ENCODE measurements at regions of chr10 and their contacts with region 1.

Region 1: DNA sequence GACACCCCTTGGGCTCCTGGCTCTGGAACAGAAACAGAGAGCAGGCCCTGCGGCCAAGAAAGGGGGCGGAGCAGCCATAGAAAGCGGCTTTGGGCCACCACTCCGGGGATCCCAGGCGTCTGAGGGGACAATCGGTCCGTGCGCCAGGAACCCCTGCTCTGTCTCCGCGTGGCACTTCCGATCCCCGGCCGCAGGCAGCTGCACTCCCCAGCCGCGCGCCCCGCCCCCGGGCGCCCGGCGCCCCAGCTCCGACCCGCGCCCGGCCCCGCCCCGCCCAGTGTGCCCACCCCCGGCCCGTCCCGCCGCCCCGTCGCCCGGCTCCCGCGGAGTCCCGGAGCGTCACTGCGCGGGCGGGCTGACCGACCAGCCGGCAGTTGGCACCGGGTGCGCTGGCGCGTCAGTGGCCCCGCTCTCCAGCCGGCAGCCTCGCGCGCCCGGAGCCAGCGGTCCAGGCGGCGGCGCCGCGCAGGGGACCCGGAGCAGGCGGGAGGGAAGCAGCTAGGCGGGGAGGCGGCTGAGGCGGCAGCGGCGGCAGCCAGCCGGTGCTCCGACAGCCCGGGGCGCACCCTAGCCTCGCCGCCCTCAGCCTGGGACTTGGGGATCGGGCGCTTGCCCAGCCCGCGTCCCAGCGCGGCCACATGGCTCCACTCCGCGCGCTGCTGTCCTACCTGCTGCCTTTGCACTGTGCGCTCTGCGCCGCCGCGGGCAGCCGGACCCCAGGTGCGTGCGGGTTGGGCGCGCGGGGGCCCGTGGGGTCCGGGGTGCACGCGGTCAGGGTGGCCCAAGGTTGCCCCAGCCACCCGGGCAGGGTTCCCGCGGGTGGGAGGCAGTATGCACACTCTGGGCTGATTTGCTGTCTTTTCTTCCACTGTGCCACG is at the start of gene ADAMTS14:
- DNase-seq: peak; percentile 54 to 83 (median 81)
- ATAC-seq: peak; percentile 40 to 59
- H3K4me3 ChIP-seq: peak within 1 kb of the TSS; percentile 53
- H3K27ac ChIP-seq: no peak within 1 kb of the TSS
- H3K4me1 ChIP-seq: peaks cover 6% of the 10 kb centered on the region
- H3K27me3 ChIP-seq: no peaks in the 10 kb centered on the region
- total RNA-seq, gene ADAMTS14: 0.03 to 0.36 (median 0.19) TPM

Region 2: DNA sequence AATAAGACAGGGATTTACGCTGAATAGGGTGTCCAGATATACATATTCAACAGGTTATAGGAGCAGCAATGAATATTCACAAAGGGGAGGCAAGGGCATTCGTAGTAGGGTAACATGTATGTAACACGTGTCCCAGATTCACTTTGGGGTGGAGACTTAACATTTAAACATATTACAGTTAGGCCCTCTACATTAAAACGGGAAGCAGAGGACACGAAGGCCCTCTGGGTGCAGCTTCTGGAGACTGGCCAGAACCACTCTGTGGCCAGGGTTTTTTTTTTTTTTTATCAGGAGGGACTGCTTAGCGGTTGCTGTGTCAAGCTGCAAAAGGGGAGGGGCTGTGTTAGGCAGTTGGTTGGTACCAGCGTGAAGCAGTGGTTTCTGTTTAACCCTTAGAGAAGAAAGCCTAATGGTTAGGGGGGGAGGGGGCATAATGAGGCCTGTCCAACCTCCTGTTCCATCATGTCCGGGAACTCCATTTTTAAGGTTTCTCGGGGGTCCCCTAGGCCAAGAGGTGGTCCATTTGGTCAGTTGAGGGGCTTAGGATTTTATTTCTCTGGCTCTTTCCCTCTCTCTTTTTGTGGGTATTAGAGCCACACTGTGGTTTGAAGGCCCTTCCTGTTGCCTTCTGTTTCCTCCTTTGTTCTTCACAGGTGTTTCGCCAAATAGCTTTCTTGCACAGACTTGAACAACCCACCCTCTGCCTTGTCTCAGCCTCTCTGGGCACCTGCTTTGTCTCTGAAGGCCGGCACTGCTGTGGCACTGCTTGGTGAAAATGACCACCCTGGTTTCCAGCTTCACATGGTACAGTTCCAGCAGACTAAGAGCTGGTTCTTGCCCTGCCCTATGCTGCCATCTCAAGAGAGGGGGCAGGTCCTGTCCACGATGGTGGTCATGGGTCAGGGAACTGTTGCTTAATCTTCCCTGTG is 96.3 kb before region 1 on chr10:
- intact Hi-C with region 1: loop called in 1 of 4 experiments (anchors 10 kb)
- DNase-seq: peak; percentile 57 to 85 (median 76)
- ATAC-seq: peak; percentile 87 to 90
- H3K4me3 ChIP-seq: no peak overlapping the region
- H3K27ac ChIP-seq: peak overlapping the region; percentile 12
- H3K4me1 ChIP-seq: peaks cover 12% of the 10 kb centered on the region
- H3K27me3 ChIP-seq: no peaks in the 10 kb centered on the region

Measured in right cardiac atrium (tissue), 5 donors.